ENCODE measurements at regions of chrX and their contacts with region 1.

Region 1: DNA sequence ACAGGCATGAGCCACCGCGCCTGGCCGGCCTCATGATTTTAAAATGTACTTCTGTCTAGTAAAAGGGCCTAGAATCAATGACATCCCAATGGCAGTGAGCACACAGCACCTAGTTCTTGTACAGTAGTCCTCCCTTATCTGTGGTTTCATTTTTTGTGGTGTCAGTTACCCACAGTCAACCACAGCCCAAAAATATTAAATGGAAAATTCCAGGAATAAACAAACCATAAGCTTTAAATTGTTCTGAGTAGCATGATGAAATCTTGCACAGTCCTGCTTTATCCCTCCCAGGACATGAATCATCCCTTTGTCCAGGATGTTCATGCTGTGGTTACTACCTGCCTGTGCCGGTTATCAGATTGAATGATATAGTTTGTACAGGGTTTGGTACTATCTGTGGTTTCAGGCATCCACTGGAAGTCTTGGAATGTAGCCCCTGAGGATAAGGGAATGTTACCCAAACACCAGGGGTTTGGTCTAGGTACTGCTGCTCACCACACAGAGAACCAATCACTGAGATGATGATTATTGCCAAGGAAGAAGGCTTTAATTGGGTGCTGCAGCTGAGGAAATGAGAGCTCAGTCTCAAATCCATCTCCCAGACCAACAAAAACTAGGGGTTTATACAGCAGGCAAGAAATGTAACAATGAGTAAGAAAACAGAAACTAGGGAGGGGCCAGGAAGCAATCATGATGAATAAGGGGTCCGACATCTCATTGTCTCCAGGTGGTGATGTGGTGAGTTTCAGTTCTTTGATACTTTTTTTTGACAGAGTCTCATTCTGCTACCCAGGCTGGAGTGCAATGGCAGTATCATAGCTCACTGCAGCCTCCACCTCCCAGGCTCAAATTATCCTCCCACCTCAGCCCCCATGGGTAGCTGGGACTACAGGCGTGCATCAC is 16.2 kb upstream of the FHL1 start:
- DNase-seq: peak; percentile 35
- H3K4me3 Mint-ChIP-seq: no peak overlapping the region
- H3K27ac Mint-ChIP-seq: peak overlapping the region; percentile 91
- H3K4me1 Mint-ChIP-seq: peaks cover 10% of the 10 kb centered on the region
- H3K27me3 Mint-ChIP-seq: no peaks in the 10 kb centered on the region

Region 2: DNA sequence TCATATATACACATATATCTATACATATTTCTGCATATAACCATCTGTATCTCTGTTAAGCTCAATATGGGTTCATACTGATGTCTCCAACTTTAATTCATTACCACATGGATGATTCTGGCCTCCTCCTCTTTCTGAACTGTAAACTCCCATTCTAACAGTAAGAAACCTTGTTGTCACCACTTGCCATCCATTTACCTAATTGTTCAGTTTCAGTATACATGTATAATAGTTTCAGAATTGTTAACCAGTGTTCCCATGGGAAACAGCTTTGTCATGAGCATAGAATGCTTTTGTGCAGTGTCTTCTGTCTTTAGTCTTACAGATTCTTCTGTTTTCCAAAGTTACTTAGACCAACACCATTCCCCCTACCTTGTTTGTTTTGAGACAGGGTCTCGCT is 110.0 kb before region 1 on chrX:
- CTCF ChIA-PET with region 1: no interaction called
- POLR2A ChIA-PET with region 1: no interaction called
- intact Hi-C with region 1: no loop called
- DNase-seq: no peak
- H3K4me3 Mint-ChIP-seq: no peak overlapping the region
- H3K27ac Mint-ChIP-seq: peak overlapping the region; percentile 28
- H3K4me1 Mint-ChIP-seq: peaks cover 10% of the 10 kb centered on the region
- H3K27me3 Mint-ChIP-seq: no peaks in the 10 kb centered on the region

Region 3: DNA sequence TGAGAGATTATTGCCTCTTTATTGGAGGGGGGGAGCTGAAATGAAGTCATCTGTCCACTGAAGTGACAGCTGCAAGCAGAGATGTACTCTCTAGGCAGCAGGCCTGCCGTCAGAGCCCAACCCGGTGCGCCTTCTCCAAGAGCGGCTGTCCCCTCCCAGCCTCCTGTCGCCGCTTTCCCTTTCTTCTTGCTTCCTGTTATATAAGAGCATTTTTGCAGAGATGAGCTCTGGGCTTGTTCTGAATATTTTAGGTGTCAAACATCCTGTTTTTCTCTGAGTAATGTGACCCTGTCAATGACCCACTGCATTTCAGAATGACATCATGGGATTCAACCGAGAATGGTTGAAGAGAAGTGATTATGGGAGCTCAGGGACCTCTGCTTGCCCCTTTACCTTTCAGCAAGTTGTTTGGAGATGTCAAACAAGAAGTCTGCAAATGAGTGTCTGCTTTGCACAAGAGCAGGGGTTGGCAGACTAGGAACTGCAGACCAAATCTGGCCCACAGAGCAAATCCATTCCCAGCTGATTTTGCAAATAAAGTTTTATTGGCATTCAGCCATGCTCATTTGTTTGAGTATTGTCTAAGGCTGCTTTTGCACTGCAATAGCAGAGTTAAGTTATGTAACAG is 66.0 kb before region 1 on chrX:
- CTCF ChIA-PET with region 1: no interaction called
- POLR2A ChIA-PET with region 1: no interaction called
- intact Hi-C with region 1: loop called (anchors 5 kb)
- DNase-seq: peak; percentile 46
- H3K4me3 Mint-ChIP-seq: peak overlapping the region; percentile 12
- H3K27ac Mint-ChIP-seq: peak overlapping the region; percentile 18
- H3K4me1 Mint-ChIP-seq: peaks cover 22% of the 10 kb centered on the region
- H3K27me3 Mint-ChIP-seq: no peaks in the 10 kb centered on the region

Region 4: DNA sequence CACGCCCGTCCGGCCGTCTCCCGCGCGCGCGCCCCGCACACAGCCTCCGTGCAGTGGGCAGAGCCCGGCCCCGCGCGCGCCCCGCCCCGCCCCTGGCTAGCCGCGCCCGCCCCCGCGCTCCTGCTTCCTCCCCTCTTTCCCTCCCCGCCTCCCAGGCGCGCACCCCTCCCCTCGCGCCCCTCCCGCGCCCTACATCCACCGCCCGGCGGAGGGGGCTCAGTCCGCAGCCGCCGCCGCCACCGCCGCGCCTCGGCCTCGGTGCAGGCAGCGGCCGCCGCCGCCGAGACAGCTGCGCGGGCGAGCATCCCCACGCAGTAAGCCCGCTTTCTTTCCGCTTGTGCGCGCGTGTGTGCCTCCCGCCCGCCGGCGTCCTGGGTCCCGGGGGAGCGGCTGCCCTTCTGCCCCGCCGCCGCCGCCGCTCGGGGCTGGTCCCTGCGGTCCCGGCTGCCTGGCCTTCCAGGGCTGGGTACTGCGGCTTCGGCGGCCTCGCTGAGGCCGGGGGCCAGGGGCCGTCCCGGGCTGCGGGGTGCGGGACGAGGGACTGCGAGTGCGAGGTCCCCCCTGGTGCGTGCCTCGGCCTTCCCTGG is 16.2 kb after region 1 on chrX and contains the start of gene FHL1:
- CTCF ChIA-PET with region 1: no interaction called
- POLR2A ChIA-PET with region 1: interaction called, 5 read pairs
- intact Hi-C with region 1: loop called (anchors 2 kb)
- DNase-seq: peak; percentile 68
- H3K4me3 Mint-ChIP-seq: peak within 1 kb of the TSS; percentile 78
- H3K27ac Mint-ChIP-seq: peak within 1 kb of the TSS; percentile 63
- H3K4me1 Mint-ChIP-seq: peaks cover 43% of the 10 kb centered on the region
- H3K27me3 Mint-ChIP-seq: no peaks in the 10 kb centered on the region
- total RNA-seq, gene FHL1: 33.9 to 37.5 TPM

Region 5: GRCh38 chrX:136200466-136200865 is 69.3 kb after region 1 on chrX:
- CTCF ChIA-PET with region 1: no interaction called
- POLR2A ChIA-PET with region 1: no interaction called
- intact Hi-C with region 1: loop called (anchors 1 kb)
- DNase-seq: peak; percentile 14
- H3K4me3 Mint-ChIP-seq: no peak overlapping the region
- H3K27ac Mint-ChIP-seq: no peak overlapping the region
- H3K4me1 Mint-ChIP-seq: peaks cover 37% of the 10 kb centered on the region
- H3K27me3 Mint-ChIP-seq: no peaks in the 10 kb centered on the region